Vagina (tissue), 2 donors: ENCODE measurements at regions of chrX and their contacts with region 1.

Region 1: GRCh38 chrX:45007598-45007997 is 134.6 kb downstream of the KDM6A start:
- DNase-seq: no peak
- H3K4me3 ChIP-seq: no peak overlapping the region
- H3K27ac ChIP-seq: no peak overlapping the region
- H3K4me1 ChIP-seq: peaks cover 22% of the 10 kb centered on the region
- H3K27me3 ChIP-seq: no peaks in the 10 kb centered on the region
- CTCF ChIP-seq: no peak
- POLR2A ChIP-seq: no peak

Region 2: GRCh38 chrX:44937606-44938005 is 70.0 kb before region 1 on chrX:
- intact Hi-C with region 1: loop called (anchors 5 kb)
- DNase-seq: no peak
- H3K4me3 ChIP-seq: no peak overlapping the region
- H3K27ac ChIP-seq: no peak overlapping the region
- H3K4me1 ChIP-seq: peaks cover 55% of the 10 kb centered on the region
- H3K27me3 ChIP-seq: no peaks in the 10 kb centered on the region
- CTCF ChIP-seq: no peak
- POLR2A ChIP-seq: no peak